Head of caudate nucleus (tissue), 42 donors: ENCODE measurements at regions of chr2 and their contacts with region 1.

Region 1: DNA sequence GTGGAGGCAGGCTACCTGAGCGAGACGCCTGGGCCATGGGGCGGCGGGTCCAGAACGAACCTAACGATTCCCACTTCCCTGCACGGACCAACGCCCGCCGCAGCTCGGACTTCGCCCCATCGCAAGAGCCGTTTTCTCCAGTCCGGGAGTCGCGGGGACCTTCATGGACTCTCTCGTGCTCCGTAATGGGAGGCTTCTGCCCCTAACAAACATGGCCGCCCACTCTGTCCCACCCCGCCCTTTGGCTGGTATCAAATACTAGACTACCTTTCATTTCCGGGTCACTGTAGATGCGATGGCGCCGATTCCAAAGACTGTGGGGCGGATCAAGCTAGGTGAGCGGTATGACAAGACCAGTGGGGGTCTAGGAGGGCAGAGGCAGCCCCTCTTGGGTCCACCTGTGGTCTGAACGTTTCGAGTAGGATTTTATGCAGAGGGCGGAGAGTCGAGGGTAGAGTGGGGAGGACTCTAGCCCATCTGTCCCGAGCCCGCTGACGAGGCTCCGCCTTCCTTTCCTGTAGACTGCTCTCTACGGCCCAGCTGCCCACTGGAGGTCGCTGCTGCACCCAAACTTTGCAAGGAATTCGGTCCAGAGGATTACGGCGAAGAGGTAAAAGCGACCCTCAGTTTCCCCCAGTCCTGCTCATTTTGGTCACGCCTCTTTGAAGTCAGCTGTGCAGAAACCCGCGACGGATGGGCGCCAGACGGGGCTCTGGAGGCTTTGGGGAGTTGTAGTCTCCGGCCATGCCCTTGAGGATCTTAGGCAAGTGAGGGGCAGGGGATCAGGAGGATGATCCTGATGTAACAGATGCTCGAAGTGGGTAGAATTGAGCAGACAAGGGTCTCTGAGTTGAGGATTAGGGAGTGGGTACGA is at the starts of genes CCDC142 and TTC31:
- DNase-seq: peak; percentile 90 to 98 (median 96)

Region 2: DNA sequence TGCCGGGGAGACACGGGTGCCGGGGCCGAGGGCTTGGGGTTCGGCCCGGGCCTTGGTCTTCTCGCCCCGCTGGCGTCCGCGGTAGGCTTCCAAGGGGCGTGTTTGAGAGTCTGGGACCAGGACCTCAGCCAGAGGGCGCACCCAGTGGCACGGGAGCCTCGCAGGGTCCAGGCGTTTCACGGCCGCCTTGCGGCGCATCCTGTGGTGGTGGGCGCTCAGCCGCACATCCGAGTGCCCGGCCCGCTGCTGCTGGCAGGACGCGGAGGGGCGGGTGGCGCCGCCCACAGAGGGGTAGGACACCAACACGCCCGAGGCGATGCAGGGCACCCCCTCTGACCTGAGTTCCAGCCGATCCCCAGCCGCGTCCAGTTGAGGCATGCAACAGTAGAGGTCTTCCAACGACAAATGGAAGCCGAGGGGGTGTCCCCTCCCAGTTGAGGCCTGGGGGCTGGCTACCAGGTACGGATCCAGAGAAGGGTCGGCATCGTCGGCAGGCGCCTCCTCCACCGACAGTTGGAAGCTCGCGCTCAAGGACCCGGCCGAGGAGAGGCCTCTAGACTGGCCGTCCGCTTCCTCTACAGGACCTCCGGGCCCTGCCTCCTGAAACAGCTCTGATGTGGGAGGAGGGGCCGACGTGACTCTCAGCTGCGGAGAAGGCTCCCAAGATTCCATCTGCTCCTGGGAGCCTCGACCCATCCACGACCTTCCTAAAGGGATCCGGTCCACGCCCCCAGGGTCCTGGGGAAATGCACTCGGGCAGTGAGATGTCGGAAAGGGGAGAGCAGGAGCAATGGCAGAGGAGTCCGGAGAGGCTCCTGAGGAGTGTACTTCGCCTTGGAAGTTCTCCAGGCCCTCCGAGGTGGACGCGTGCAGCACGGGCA is 67.9 kb before region 1 on chr2:
- intact Hi-C with region 1: no loop called
- DNase-seq: peak in 40 of 42 donors; percentile 56 to 87 (median 74)

Region 3: DNA sequence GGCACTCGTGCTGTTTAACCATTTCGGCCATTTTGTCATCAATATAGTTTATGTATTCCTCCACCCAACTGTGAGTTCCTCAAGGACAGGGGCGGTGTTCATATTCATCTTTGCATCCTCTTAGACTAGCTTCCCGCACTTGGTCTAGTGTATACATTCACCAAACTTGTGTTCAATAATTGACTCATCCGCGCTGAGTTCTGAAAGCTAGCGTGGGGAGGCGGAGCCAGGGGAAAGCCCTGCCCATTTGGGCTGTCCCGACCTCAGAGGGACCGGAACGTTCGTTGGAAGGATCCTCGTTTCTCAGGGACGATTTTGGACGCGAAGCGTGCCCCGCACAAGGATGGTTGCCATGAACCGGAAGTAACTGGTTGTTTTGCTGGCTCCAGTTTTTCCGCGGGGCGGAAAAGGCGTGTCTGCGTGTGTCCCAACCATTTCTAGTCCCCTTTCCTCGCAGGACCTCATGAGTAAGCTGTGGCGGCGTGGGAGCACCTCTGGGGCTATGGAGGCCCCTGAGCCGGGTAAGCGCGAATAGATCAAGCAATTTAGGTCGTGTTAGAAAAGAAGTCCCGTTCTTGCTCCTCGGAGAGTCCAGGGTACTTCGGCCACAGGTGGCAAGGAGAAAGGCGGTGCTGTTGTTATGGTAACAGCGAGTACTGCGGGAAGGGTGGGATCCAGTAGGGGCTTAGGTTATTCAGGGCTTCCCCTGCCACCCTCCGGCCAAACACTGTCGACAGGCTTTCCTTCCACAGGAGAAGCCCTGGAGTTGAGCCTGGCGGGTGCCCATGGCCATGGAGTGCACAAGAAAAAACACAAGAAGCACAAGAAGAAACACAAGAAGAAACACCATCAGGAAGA is 28.2 kb before region 1 on chr2 and contains the start of gene INO80B:
- intact Hi-C with region 1: loop called (anchors 2 kb)
- DNase-seq: peak; percentile 92 to 99 (median 96)

Region 4: GRCh38 chr2:74498500-74499266 is 15.6 kb after region 1 on chr2:
- intact Hi-C with region 1: no loop called
- DNase-seq: no peak

Region 5: DNA sequence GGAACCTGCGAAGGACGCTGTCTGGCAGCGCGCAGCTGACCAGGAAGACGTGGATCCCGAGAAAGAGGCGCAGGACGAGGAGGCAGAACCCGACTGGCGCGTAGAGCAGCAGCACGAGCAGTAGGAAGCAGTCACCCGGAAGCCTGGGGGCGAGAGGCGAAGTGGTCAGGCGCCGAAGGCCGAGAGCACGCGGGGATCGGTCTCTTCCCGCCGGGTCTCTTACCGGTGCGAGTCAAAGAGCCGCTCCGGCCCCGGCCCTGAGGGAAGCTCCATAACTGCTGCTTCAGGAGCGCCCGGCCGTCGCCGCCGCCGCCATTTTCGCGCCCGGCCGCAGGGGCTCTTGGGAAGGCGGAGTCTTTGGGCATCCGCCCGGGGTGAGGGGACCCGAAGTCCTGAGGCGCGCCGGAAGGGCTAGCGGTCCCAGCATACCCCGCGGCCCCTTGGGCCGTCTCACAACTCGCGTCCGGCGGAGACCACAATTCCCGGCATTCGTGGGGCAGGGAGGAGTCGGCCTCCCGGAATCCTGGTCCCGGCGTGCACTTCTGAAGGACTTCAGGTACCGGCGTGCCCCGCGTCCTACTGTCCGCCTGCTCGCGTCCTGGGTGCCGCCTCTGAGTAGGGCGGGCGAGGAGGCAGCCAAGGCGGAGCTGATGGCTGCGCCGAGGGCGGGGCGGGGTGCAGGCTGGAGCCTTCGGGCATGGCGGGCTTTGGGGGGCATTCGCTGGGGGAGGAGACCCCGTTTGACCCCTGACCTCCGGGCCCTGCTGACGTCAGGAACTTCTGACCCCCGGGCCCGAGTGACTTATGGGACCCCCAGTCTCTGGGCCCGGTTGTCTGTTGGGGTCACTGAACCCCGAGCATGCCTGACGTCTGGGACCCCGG is 46.6 kb after region 1 on chr2 and contains the starts of genes AUP1 and HTRA2:
- intact Hi-C with region 1: loop called (anchors 1 kb)
- DNase-seq: peak; percentile 96 to 99 (median 98)

Region 6: DNA sequence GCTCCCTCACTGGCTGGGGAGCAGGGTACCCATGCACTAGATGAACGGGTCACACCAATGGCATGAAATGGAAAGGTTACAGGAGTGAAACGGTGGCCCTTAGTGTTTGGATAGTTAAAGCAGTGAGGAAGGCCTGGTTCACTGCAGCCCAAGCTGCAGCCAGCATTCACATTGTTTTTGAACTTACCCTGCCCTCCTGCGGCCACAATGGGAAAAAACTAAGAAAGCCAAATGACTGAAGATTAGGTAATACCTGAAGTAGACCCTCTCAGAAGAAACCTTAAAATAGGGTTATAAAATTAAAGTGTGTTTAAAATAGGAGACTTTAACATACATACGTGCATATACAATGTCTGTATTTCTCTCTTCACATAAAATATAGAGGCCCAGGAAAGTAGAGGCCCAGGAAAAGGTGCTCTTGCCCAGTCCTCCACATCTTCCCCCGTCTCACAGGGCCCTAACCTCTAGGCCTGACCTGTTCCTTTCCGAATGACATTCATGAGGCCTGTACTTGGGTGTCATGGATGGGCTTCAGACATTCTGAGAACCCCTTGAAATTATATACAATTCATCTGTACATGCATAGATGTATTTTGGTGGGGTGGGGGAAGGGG is 104.7 kb after region 1 on chr2:
- intact Hi-C with region 1: loop called (anchors 5 kb)
- DNase-seq: peak; percentile 9 to 83 (median 62)

Region 7: GRCh38 chr2:74632209-74632938 is 149.3 kb after region 1 on chr2:
- intact Hi-C with region 1: no loop called
- DNase-seq: no peak